ENCODE measurements at regions of chr9 and their contacts with region 1.

Region 1: DNA sequence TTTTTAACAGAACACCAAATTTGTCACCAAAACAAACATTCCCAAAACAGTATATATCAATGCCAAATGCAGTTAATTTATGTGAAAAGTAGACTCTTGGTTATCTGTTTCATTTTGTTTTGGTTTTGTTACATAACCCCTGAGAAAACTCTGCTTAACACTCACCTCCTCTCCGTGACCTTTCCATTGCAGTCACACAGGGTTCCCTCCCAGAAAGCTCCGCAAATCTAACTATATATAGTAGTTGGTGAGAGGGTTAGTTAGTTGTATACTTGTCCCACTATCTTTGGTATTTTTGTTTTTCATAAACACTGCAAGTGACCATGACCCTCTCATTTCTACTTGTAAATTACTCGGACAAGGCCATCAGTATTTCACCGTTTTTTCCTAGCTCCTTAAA is 25.5 kb downstream of the NFIB start:
- H3K4me3 Mint-ChIP-seq: no peak overlapping the region
- H3K27ac Mint-ChIP-seq: no peak overlapping the region
- H3K4me1 Mint-ChIP-seq: no peaks in the 10 kb centered on the region
- H3K27me3 Mint-ChIP-seq: no peaks in the 10 kb centered on the region

Region 2: GRCh38 chr9:14309403-14309802 is 21.0 kb after region 1 on chr9:
- intact Hi-C with region 1: loop called (anchors 2 kb)
- H3K4me3 Mint-ChIP-seq: no peak overlapping the region
- H3K27ac Mint-ChIP-seq: no peak overlapping the region
- H3K4me1 Mint-ChIP-seq: peaks cover 16% of the 10 kb centered on the region
- H3K27me3 Mint-ChIP-seq: peaks cover 50% of the 10 kb centered on the region

Measured in dendritic cell treated with granulocyte-macrophage colony-stimulating factor and Interleukin-4, amounts not matched to agents 40 ng/mL and 50 ng/mL, for 4 days (primary cell).